IMR-90 (cell line): ENCODE measurements at regions of chr15 and their contacts with region 1.

Region 1: DNA sequence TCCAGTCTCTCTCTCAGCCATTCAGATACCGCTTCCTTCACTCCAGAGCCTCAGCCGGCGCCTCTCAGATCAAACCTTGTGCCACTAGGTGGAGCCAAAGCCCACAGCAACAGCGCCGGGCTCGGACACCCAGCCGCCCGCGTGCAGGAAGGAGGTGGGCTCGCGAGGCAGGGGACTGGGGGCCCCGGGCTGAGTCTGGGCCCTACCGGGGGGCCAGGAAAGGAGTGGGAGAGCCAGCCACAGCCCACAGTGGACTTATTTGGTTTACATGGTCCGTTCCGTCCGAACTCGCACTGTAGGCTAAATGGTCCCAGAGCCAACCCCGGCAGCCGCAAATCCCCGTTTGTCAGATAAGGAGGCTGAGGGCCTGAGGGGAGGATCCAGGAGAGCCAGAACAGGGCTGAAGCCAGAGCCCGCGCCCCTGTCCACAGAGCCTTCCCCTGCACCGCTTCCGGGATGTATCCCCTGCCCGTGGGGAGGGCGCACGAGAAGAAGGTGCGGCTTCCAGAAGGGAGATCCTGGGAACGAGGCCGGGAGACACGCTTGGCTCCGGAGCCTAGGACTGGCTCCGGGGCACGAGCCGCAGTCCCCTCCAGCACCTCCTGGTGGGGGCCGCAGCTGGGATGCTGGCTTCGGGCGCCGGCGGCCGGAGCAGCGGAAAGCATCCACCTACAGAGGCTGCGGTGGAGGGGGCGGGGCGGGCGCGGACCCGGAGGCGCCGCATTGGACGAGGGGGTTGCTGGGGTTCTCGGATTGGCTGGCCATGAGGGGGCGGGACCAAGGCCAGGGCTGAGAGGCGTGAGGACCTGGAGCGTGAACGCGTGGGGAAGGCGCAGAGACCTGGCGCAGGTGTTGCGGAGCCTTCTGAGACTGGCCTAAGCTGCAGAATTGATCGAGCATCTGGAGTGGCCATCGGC is 6.5 kb upstream of the CYP11A1 start:
- DNase-seq: peak; percentile 72
- ATAC-seq: peak; percentile 95
- H3K4me3 ChIP-seq: peak overlapping the region; percentile 78
- H3K27ac ChIP-seq: no peak overlapping the region; the same call in 1 of the 2 replicates
- H3K4me1 ChIP-seq: peaks cover 4% of the 10 kb centered on the region; the same call in 1 of the 2 replicates
- H3K27me3 ChIP-seq: peaks cover 31% of the 10 kb centered on the region
- CTCF ChIP-seq: peak; percentile 92
- POLR2A ChIP-seq: peak; percentile 30; the same call in 1 of the 2 replicates
- RAD21 ChIP-seq: peak; percentile 93

Region 2: GRCh38 chr15:74307827-74308644 is 66.0 kb before region 1 on chr15:
- CTCF ChIA-PET with region 1: no interaction called
- POLR2A ChIA-PET with region 1: no interaction called
- dilution Hi-C with region 1: no loop called
- in situ Hi-C with region 1: no loop called
- intact Hi-C with region 1: no loop called
- DNase-seq: peak; percentile 52
- ATAC-seq: peak; percentile 92
- H3K4me3 ChIP-seq: no peak overlapping the region
- H3K27ac ChIP-seq: no peak overlapping the region
- H3K4me1 ChIP-seq: no peaks in the 10 kb centered on the region
- H3K27me3 ChIP-seq: peaks cover 85% of the 10 kb centered on the region
- CTCF ChIP-seq: peak; percentile 82
- POLR2A ChIP-seq: no peak
- RAD21 ChIP-seq: peak; percentile 86

Region 3: DNA sequence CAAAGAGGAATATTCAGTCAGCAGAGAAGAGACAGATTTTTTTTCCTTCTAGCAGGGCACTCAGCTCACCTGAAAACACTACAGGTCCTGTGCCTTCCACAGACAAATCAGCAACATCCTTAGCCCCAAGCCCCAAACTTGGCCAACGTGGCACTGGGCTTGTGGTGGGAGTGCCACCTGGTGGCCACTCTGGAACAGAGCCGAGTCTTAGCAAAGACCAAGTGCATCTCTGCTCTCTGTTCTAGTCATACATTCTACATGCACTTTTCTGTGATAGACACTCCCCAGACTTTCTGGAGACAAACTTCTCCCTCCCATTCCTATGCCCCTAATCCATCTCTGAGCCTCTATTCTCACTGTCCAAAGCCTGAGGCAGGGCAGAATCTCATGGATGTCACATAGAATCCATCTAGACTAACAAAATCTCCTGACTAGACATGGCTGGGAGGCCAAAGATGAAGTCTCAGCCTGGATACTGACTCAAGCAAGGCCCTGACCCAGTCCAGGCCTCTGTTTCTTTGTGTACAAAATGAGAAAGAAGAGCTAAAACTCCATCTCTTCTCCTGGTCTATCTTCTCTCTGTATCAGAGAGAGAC is 64.8 kb after region 1 on chr15:
- CTCF ChIA-PET with region 1: interaction called, 3 read pairs
- POLR2A ChIA-PET with region 1: no interaction called
- dilution Hi-C with region 1: no loop called
- in situ Hi-C with region 1: no loop called
- intact Hi-C with region 1: loop called (anchors 2 kb)
- DNase-seq: peak; percentile 77
- ATAC-seq: peak; percentile 68
- H3K4me3 ChIP-seq: no peak overlapping the region
- H3K27ac ChIP-seq: no peak overlapping the region
- H3K4me1 ChIP-seq: peaks cover 14% of the 10 kb centered on the region
- H3K27me3 ChIP-seq: no peaks in the 10 kb centered on the region
- CTCF ChIP-seq: peak; percentile 95
- POLR2A ChIP-seq: peak; percentile 49
- RAD21 ChIP-seq: peak; percentile 99

Region 4: GRCh38 chr15:74489518-74490338 is 115.7 kb after region 1 on chr15:
- CTCF ChIA-PET with region 1: no interaction called
- POLR2A ChIA-PET with region 1: no interaction called
- dilution Hi-C with region 1: no loop called
- in situ Hi-C with region 1: no loop called
- intact Hi-C with region 1: loop called (anchors 1 kb)
- DNase-seq: peak; percentile 49
- ATAC-seq: peak; percentile 90
- H3K4me3 ChIP-seq: no peak overlapping the region
- H3K27ac ChIP-seq: no peak overlapping the region
- H3K4me1 ChIP-seq: no peaks in the 10 kb centered on the region
- H3K27me3 ChIP-seq: no peaks in the 10 kb centered on the region
- CTCF ChIP-seq: peak; percentile 66
- POLR2A ChIP-seq: no peak
- RAD21 ChIP-seq: peak; percentile 71

Region 5: DNA sequence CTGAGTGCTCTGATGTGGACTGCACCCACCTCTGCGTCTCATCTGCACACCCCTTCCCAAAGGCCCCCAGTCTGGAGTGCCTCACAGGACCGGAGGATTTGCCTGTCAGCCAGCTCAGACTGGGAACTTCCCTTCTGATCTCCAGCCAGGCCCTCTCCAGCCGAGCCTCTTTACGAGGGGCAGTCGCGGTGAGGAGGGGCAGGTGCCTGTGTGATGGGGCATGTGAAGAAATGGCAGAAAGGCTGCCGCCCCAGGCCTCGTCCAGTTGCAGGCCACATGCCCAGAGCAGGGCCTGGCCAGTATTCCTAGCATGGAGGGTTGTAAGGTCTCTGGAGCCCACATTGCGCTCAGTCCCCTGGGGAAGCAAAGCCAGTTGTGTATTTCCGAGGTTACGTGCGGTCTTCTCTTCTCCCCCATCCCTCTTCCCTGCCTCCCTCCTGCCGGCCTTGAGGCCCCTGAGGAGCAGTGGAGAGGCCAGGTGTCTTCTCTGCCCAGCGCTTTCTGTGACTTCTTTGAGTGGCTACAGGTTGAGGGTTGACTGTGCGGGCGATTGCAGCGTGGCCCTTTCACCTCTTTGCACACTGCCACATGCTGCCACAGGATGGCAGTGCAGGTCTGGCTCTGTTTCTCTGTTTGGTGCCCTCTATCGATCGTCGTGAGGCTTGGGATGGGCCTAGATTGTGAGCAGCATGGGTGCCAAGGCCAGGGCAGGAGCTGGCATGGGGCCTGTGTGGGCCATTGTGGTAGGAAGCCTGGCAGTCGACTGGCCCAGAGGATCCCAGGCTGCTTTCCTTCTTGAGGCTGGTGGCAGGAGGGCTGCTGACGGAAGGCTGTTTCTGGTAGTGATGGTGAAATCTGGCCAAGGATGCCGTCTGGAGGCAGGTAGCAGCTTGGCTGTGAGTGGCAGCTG is 246.9 kb after region 1 on chr15:
- CTCF ChIA-PET with region 1: no interaction called
- POLR2A ChIA-PET with region 1: no interaction called
- dilution Hi-C with region 1: no loop called
- in situ Hi-C with region 1: loop called (anchors 5 kb)
- intact Hi-C with region 1: loop called (anchors 1 kb)
- DNase-seq: peak; percentile 64
- ATAC-seq: peak; percentile 71
- H3K4me3 ChIP-seq: no peak overlapping the region
- H3K27ac ChIP-seq: no peak overlapping the region
- H3K4me1 ChIP-seq: peaks cover 6% of the 10 kb centered on the region
- H3K27me3 ChIP-seq: no peaks in the 10 kb centered on the region
- CTCF ChIP-seq: peak; percentile 99
- POLR2A ChIP-seq: no peak
- RAD21 ChIP-seq: peak; percentile 71

Region 6: GRCh38 chr15:74635228-74635627 is 261.2 kb after region 1 on chr15:
- CTCF ChIA-PET with region 1: no interaction called
- POLR2A ChIA-PET with region 1: no interaction called
- dilution Hi-C with region 1: no loop called
- in situ Hi-C with region 1: no loop called
- intact Hi-C with region 1: loop called (anchors 1 kb)
- DNase-seq: peak; percentile 61
- ATAC-seq: peak; percentile 85
- H3K4me3 ChIP-seq: no peak overlapping the region
- H3K27ac ChIP-seq: no peak overlapping the region
- H3K4me1 ChIP-seq: no peaks in the 10 kb centered on the region
- H3K27me3 ChIP-seq: no peaks in the 10 kb centered on the region
- CTCF ChIP-seq: peak; percentile 82
- POLR2A ChIP-seq: no peak
- RAD21 ChIP-seq: peak; percentile 90

Region 7: GRCh38 chr15:74674119-74674518 is 300.1 kb after region 1 on chr15:
- CTCF ChIA-PET with region 1: no interaction called
- POLR2A ChIA-PET with region 1: no interaction called
- dilution Hi-C with region 1: no loop called
- in situ Hi-C with region 1: no loop called
- intact Hi-C with region 1: no loop called
- DNase-seq: no peak
- ATAC-seq: no peak
- H3K4me3 ChIP-seq: no peak overlapping the region
- H3K27ac ChIP-seq: no peak overlapping the region
- H3K4me1 ChIP-seq: no peaks in the 10 kb centered on the region
- H3K27me3 ChIP-seq: no peaks in the 10 kb centered on the region
- CTCF ChIP-seq: no peak
- POLR2A ChIP-seq: no peak
- RAD21 ChIP-seq: no peak

Region 8: DNA sequence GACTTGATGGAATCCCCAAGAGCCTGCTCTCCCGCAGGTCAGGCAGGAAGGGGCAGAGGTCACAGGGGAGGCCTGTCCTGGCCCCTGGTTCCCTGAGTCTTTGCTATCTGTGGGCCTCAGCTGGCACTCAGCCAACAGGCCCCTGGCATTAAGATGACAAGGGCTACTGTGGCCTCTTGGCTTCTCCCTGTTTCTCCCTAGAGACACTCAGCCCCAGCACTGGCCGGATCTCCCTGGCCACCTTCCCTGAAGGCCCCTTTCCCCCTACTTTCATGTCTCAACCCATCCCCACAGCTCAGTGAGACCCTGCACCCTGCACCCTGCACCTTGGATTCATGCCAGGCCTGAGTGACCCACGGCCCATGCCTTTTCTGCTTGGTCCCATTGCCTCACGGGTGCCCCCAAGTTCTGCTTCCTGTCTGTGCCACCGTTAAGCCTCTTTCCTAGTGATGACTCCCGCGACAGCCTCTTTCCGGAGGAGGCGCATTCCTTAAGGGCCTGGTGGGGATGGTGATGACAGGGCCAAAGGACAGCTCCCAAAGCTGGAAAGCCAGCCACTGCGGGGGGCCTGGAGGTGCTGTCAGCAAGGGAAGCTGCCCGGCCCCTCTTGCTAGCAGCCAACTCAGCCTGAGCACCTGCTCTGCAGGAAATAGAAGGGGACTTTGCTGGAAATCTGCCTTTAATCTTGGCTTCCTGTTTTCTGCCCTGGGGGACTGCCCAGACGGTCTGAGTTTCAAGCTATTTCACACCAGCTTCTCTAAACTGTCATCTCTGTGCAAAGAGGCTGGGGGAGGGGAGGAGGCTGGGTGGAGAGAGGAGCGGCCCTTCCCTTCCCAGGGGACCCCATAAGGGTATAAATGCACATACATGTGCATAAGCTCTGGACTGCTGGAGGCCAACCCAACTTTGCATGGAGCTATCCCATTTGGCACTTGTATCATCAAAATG is 403.1 kb after region 1 on chr15:
- CTCF ChIA-PET with region 1: no interaction called
- POLR2A ChIA-PET with region 1: no interaction called
- dilution Hi-C with region 1: no loop called
- in situ Hi-C with region 1: loop called (anchors 10 kb)
- intact Hi-C with region 1: no loop called
- DNase-seq: no peak
- ATAC-seq: no peak
- H3K4me3 ChIP-seq: no peak overlapping the region
- H3K27ac ChIP-seq: no peak overlapping the region
- H3K4me1 ChIP-seq: peaks cover 4% of the 10 kb centered on the region
- H3K27me3 ChIP-seq: no peaks in the 10 kb centered on the region
- CTCF ChIP-seq: no peak
- POLR2A ChIP-seq: no peak
- RAD21 ChIP-seq: no peak

Region 9: GRCh38 chr15:74956648-74957300 is 582.8 kb after region 1 on chr15 and contains the start of gene RPP25:
- CTCF ChIA-PET with region 1: no interaction called
- POLR2A ChIA-PET with region 1: no interaction called
- dilution Hi-C with region 1: no loop called
- in situ Hi-C with region 1: no loop called
- intact Hi-C with region 1: loop called (anchors 10 kb)
- DNase-seq: peak; percentile 21
- ATAC-seq: peak; percentile 81
- H3K4me3 ChIP-seq: peak within 1 kb of the TSS; percentile 37
- H3K27ac ChIP-seq: no peak within 1 kb of the TSS; the same call in 1 of the 2 replicates
- H3K4me1 ChIP-seq: peaks cover 8% of the 10 kb centered on the region; the same call in 1 of the 2 replicates
- H3K27me3 ChIP-seq: peaks cover 41% of the 10 kb centered on the region
- CTCF ChIP-seq: no peak
- POLR2A ChIP-seq: no peak
- RAD21 ChIP-seq: no peak
- total RNA-seq, gene RPP25: under 0.01 and 0.18 TPM in 2 replicates